ENCODE measurements at regions of chr3 and their contacts with region 1.

Region 1: DNA sequence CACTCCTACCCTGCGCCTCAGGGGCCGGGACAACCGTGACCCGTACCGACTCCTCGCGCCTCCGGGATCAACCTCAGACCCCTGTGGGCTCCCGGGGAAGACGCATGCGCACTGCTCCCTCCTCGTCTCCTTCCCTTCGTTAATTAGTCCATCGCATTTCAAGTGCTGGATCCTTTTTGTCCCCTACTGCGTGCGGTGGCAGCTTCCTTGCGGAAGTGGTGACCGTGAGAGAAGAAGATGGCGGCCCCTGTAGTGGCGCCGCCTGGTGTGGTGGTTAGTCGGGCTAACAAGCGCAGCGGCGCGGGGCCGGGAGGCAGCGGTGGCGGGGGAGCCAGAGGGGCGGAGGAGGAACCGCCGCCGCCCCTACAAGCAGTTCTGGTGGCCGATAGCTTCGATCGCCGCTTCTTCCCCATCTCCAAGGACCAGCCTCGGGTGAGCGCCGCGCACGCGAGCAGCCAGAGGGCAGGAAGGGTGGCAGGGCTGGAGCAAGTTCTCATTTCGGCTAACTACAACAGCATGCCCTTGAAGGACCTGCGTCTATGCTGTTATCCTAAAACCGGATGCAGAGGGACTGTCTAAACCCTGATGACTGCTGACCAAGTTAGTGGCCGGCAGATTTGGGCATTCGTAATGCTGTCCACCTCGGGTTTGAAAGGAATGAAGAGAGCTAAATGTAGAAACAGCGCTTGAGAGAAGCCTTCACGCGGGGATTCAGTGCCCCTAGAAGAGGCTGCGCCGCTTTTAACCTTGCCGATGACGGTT is at the start of gene EIF2B5:
- DNase-seq: peak; percentile 94
- H3K4me3 ChIP-seq: peak within 1 kb of the TSS; percentile 53 to 90 (median 76)
- H3K27ac ChIP-seq: peak within 1 kb of the TSS; percentile 79 to 95 (median 89)
- H3K4me1 ChIP-seq: peaks cover 0 to 20% (median 17%) of the 10 kb centered on the region in 4 donors
- H3K27me3 ChIP-seq: no peaks in the 10 kb centered on the region
- CTCF ChIP-seq: peak in 4 of 5 experiments; percentile 9 to 35 (median 24)
- EP300 ChIP-seq: no peak
- POLR2A ChIP-seq: peak; percentile 77
- total RNA-seq, gene EIF2B5: 45.1 to 49.7 (median 48.1) TPM

Region 2: DNA sequence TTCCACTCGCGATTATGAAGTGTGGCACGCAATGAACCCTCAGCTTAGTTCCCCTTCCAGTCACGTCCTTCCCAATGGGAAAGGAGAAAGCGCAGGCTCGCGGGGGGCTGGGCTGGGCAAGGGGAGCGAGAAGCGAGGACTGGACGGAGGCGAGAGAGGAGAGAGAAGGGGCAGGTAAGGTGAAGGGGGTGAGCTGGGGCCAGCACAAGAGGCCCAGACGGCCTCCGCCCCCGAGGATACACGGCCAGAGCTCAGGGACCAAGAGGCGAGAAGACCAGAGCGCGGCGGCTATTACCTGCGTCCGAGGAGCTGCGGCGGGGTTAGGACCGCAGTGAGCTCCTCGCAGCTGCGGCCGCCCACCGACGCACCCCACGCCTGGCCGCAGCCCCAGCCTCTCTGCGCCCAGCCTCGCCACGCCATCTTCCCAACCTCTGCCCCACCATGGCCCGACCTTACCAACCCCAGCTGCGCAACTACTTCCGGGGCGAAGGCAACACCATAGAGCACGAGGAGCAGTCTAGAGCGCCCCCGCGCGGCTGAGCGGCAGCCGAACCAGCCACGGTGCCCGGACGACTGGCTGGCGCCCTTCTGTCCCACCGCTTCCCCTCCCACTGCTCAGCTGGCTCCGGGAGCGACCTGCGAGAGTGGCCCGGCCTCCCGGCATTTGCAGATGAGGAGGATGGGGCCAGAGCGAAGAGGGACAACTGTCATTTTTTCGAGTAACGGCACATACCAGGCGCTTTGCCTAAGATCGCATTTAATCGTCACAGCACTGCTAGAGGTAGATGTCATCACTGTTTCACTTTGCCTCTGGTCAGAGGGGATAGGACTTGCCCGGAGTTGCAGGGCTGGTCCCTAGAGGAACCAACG is 250.7 kb before region 1 on chr3 and contains the start of gene PARL:
- in situ Hi-C with region 1: loop called in 1 of 4 experiments (anchors 25 kb)
- intact Hi-C with region 1: no loop called
- DNase-seq: peak; percentile 97
- H3K4me3 ChIP-seq: peak within 1 kb of the TSS; percentile 84 to 96 (median 90)
- H3K27ac ChIP-seq: peak within 1 kb of the TSS; percentile 85 to 91 (median 86)
- H3K4me1 ChIP-seq: peaks cover 16 to 27% (median 22%) of the 10 kb centered on the region in 4 donors
- H3K27me3 ChIP-seq: no peaks in the 10 kb centered on the region
- CTCF ChIP-seq: peak; percentile 91 to 96 (median 93)
- EP300 ChIP-seq: no peak
- POLR2A ChIP-seq: peak; percentile 79
- total RNA-seq, gene PARL: 27.3 to 61.3 (median 48.8) TPM

Region 3: GRCh38 chr3:184185461-184186308 is 50.4 kb after region 1 on chr3 and contains the start of gene ABCF3:
- in situ Hi-C with region 1: no loop called
- intact Hi-C with region 1: loop called (anchors 10 kb)
- DNase-seq: peak; percentile 100
- H3K4me3 ChIP-seq: peak within 1 kb of the TSS; percentile 65 to 88 (median 80)
- H3K27ac ChIP-seq: peak within 1 kb of the TSS; percentile 84 to 90 (median 86)
- H3K4me1 ChIP-seq: peaks cover 15 to 29% (median 20%) of the 10 kb centered on the region in 4 donors
- H3K27me3 ChIP-seq: no peaks in the 10 kb centered on the region
- CTCF ChIP-seq: no peak
- EP300 ChIP-seq: no peak
- POLR2A ChIP-seq: peak; percentile 87
- total RNA-seq, gene ABCF3: 58.6 to 286 (median 133) TPM

Region 4: DNA sequence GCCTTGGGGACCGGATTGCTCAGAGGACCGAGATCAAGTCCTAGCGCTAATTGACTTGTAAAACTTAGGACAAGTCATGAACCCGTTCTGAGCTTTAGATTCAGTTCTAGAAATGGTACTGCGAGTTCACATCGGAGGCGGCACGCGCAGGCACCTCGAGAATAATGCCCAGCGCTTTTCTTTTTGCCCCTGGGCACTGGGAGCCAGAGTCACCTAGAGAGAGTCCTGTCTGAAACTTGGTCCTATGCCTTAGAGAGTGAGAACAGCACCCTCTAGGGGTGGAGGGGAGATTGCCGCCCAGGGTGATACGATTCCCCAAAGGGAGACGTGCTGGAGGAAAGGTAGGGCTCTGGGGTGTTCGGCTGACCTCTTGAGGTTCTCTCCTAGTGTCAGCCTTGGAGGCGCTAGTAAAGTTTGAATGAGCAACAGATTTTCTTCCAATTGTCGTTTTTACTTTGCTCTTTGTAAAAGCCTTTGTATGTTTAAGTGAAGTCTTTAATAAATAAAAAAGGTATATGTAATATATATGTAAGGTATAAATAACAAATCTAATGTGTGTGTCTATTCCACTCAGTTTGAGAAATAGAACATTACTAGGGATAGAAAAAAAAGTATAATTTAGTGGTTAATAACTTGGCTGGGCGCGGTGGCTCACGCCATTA is 115.0 kb after region 1 on chr3:
- in situ Hi-C with region 1: loop called in 1 of 4 experiments (anchors 25 kb)
- intact Hi-C with region 1: no loop called
- DNase-seq: peak; percentile 95
- H3K4me3 ChIP-seq: peak overlapping the region; percentile 42 to 89 (median 66)
- H3K27ac ChIP-seq: peak overlapping the region; percentile 82 to 89 (median 88)
- H3K4me1 ChIP-seq: peaks cover 10 to 19% (median 15%) of the 10 kb centered on the region in 4 donors
- H3K27me3 ChIP-seq: no peaks in the 10 kb centered on the region
- CTCF ChIP-seq: peak; percentile 87 to 95 (median 92)
- EP300 ChIP-seq: no peak
- POLR2A ChIP-seq: no peak

Measured in transverse colon (tissue), 4 donors.